ENCODE measurements at regions of chr6 and their contacts with region 1.

Region 1: GRCh38 chr6:139323511-139324300 is 31.9 kb upstream of the TXLNB start:
- DNase-seq: peak; percentile 90
- H3K4me3 ChIP-seq: peak overlapping the region; percentile 61
- H3K27ac ChIP-seq: peak overlapping the region; percentile 97
- H3K4me1 ChIP-seq: peaks cover 78% of the 10 kb centered on the region
- CTCF ChIP-seq: no peak

Region 2: DNA sequence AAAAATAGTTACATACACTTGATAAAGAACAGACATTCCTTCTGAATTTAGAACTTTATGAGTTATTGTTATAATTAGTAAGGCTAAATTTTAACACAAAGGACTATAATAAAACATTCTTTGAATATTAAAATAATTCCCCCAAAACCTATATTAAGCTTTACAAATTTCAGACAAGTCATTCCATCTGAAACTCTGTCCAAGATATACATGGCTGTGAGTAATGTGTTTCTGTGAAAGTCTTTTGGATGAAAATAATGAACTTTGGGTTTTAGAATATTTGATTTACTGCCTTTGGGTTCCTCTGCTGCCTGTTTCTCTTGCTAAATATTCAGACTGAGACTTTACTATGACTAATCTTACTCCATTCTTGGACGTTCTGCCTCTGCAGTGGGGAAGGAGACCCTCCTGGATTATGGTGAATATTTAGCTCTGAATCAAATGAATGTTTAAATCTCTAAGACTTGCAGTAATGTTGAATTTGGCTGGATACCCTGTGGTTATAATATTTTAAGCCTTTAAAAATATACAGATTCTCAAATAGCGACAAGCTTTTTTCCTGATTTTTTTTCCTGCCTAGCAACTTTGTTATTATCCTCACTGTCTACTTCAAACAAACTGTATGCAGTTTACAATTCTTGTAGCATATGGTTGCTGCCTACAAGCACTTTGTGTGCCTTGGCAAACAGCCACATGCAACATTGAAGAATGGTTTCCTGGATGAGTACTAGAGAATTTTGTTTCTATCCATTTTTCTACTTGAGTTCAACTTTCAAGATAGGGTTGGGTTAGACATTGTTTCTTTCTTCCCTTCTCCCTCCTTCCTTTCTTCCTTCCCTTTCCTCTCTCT is 83.3 kb before region 1 on chr6:
- CTCF ChIA-PET with region 1: no interaction called
- POLR2A ChIA-PET with region 1: no interaction called
- intact Hi-C with region 1: no loop called
- DNase-seq: no peak
- H3K4me3 ChIP-seq: no peak overlapping the region
- H3K27ac ChIP-seq: no peak overlapping the region
- H3K4me1 ChIP-seq: no peaks in the 10 kb centered on the region
- CTCF ChIP-seq: no peak

Region 3: GRCh38 chr6:139250296-139251044 is 73.2 kb before region 1 on chr6:
- CTCF ChIA-PET with region 1: no interaction called
- POLR2A ChIA-PET with region 1: no interaction called
- intact Hi-C with region 1: no loop called
- DNase-seq: peak; percentile 84
- H3K4me3 ChIP-seq: no peak overlapping the region
- H3K27ac ChIP-seq: no peak overlapping the region
- H3K4me1 ChIP-seq: peaks cover 12% of the 10 kb centered on the region
- CTCF ChIP-seq: peak; percentile 83

Region 4: DNA sequence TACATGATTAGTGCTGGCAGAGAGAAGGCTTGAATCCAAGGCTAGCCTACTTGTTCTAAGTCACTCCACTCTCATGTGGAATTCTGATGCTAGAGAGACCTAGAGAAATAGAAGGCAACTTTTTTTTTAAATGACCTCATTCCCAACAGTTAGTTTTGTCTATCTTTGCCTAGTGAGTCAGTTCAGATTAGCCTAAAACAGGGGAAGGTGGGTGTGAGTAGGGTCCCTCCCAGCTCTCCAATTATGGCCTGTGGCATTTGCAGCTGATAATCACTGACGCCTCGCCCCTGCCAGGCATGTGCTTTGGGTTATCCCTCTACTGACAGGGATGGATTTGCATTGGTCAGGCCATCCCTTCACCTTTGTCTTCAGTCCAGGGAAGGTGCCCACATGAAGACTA is 45.5 kb before region 1 on chr6:
- CTCF ChIA-PET with region 1: no interaction called
- POLR2A ChIA-PET with region 1: interaction called, 132 read pairs
- intact Hi-C with region 1: loop called (anchors 1 kb)
- DNase-seq: no peak
- H3K4me3 ChIP-seq: no peak overlapping the region
- H3K27ac ChIP-seq: peak overlapping the region; percentile 89
- H3K4me1 ChIP-seq: peaks cover 89% of the 10 kb centered on the region
- CTCF ChIP-seq: no peak

Region 5: DNA sequence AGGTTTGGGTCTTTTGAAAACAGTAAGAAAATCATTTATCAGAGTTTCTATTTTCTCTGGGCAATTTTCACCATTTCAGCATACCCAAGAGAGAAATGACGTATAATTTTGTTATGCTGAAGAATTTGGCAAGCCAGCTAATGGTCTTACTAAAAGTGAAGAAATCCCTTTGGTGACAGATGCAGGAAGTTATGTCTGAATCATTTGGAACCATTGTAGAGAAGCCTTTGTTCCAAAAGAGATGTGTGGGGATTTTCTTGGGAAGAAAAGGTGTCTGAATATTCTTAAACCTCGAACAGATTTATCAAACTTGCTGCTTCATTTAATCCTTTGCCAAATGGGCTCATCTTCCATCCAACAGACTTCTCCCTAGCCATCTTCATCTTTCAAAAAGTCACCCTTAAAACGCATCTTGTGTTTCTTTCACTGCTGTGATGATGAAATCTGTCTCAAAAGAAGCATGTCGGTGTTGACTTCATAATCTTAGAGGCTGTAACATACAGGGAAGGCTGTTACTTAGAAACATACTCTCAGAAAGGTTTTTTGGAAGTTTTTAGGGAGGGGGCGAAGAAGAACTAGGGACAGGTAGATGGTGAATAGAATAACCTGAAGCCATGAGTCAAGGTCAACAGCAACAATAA is 11.2 kb after region 1 on chr6:
- CTCF ChIA-PET with region 1: interaction called, 3 read pairs
- POLR2A ChIA-PET with region 1: interaction called, 61 read pairs
- intact Hi-C with region 1: no loop called
- DNase-seq: no peak
- H3K4me3 ChIP-seq: peak overlapping the region; percentile 26
- H3K27ac ChIP-seq: no peak overlapping the region
- H3K4me1 ChIP-seq: peaks cover 43% of the 10 kb centered on the region
- CTCF ChIP-seq: no peak

Measured in OCI-LY7 (cell line).